ENCODE measurements at regions of chr21 and their contacts with region 1.

Region 1: DNA sequence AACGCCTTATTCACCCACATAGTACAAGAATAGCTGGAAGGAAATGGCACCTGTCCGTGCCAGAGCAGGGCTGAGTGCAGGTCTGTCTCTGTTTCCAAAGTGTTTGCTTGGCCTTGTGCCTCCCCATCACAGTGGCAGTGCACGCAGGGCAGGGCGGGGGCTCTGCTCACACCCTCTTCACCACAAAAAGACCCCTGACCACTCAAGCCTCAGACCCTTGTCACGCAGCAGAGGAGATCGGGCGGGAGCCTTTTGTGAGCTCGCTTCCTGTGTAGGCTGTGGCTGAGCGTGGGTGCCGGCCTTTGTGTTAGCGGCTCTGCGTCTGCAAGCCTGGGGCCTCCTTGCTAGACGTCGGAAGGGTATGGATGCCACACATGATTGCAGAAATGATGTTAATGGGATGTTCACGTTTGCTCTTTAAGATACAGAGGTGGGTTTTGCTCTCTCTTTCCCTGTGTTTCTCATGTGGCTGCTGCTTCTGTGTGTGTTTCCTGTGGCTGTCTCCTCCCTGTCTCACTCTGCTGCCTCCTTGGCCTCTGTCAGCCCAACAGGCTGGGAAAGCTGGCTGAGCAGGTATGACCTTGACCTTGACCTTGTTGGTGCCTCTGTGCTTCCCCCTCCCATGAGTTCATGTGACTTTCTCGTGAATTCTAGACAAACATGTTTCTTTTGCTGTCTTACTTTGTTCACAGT is 45.4 kb downstream of the S100B start:
- DNase-seq: peak; percentile 37 to 85 (median 62)
- ATAC-seq: peak; percentile 84
- H3K4me3 ChIP-seq: peak overlapping the region; percentile 44
- H3K4me3 Mint-ChIP-seq: peak overlapping the region; percentile 65
- H3K27ac ChIP-seq: peak overlapping the region; percentile 72 to 84
- H3K27ac Mint-ChIP-seq: peak overlapping the region; percentile 95
- H3K4me1 ChIP-seq: peaks cover 74% of the 10 kb centered on the region
- H3K4me1 Mint-ChIP-seq: peaks cover 75% of the 10 kb centered on the region
- H3K27me3 ChIP-seq: no peaks in the 10 kb centered on the region
- H3K27me3 Mint-ChIP-seq: no peaks in the 10 kb centered on the region
- CTCF ChIP-seq: no peak

Region 2: DNA sequence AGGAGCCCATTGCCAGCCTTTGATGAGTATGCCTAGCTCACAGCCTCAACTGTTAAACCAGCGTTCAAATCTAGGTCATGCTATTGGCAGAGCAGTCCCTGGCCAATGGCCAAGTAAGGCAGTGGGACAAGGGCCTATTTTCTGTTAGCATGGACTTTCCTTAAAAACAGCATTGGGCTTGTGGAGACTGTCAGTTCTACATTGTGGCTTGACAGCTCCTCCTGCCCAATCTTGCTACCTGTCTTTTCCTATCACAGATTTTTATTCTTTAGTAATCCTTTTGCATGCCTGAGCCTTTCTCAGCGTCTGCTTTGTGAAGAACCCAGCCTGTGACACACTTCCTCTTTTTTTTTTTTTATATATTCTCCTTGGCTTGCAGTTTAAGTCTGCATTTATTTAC is 44.3 kb before region 1 on chr21:
- CTCF ChIA-PET with region 1: no interaction called
- POLR2A ChIA-PET with region 1: no interaction called
- intact Hi-C with region 1: loop called in 1 of 2 experiments (anchors 5 kb)
- DNase-seq: peak in 5 of 14 experiments; percentile 8 to 62 (median 45)
- ATAC-seq: peak; percentile 64
- H3K4me3 ChIP-seq: no peak overlapping the region
- H3K4me3 Mint-ChIP-seq: no peak overlapping the region
- H3K27ac ChIP-seq: peak overlapping the region in 1 of 2 donors; percentile 15
- H3K27ac Mint-ChIP-seq: peak overlapping the region; percentile 82
- H3K4me1 ChIP-seq: peaks cover 8% of the 10 kb centered on the region
- H3K4me1 Mint-ChIP-seq: peaks cover 26% of the 10 kb centered on the region
- H3K27me3 ChIP-seq: no peaks in the 10 kb centered on the region
- H3K27me3 Mint-ChIP-seq: no peaks in the 10 kb centered on the region
- CTCF ChIP-seq: no peak

Region 3: DNA sequence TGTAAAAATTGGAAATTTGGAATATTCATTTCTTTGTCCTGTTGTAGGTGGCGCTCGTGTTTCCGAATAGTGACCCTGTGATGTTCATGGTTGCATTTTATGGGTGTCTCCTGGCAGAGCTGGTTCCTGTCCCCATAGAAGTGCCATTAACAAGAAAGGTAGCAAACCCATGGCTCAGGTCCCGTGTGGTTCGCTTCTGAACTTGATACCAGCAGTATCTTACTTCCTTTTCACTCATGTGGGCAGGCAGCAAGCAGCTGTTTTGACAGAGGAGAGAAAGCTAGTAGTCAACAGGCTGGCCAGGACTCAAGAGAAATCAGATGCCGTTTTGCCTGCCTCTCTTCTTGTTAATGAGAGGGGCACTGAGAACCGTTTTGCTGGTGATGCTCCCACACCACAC is 27.4 kb before region 1 on chr21:
- CTCF ChIA-PET with region 1: no interaction called
- POLR2A ChIA-PET with region 1: interaction called, 19 read pairs
- intact Hi-C with region 1: no loop called
- DNase-seq: peak in 10 of 14 experiments; percentile 9 to 62 (median 34)
- ATAC-seq: peak; percentile 86
- H3K4me3 ChIP-seq: no peak overlapping the region
- H3K4me3 Mint-ChIP-seq: peak overlapping the region; percentile 67
- H3K27ac ChIP-seq: no peak overlapping the region
- H3K27ac Mint-ChIP-seq: peak overlapping the region; percentile 81
- H3K4me1 ChIP-seq: peaks cover 5% of the 10 kb centered on the region
- H3K4me1 Mint-ChIP-seq: peaks cover 54% of the 10 kb centered on the region
- H3K27me3 ChIP-seq: no peaks in the 10 kb centered on the region
- H3K27me3 Mint-ChIP-seq: no peaks in the 10 kb centered on the region
- CTCF ChIP-seq: peak; percentile 29

Region 4: GRCh38 chr21:46622226-46622625 is 62.8 kb after region 1 on chr21:
- CTCF ChIA-PET with region 1: no interaction called
- POLR2A ChIA-PET with region 1: interaction called, 16 read pairs
- intact Hi-C with region 1: no loop called
- DNase-seq: peak in 9 of 14 experiments; percentile 20 to 90 (median 56)
- ATAC-seq: peak; percentile 70
- H3K4me3 ChIP-seq: no peak overlapping the region
- H3K4me3 Mint-ChIP-seq: peak overlapping the region; percentile 78
- H3K27ac ChIP-seq: peak overlapping the region; percentile 63 to 69
- H3K27ac Mint-ChIP-seq: peak overlapping the region; percentile 94
- H3K4me1 ChIP-seq: peaks cover 69% of the 10 kb centered on the region
- H3K4me1 Mint-ChIP-seq: peaks cover 74% of the 10 kb centered on the region
- H3K27me3 ChIP-seq: no peaks in the 10 kb centered on the region
- H3K27me3 Mint-ChIP-seq: no peaks in the 10 kb centered on the region
- CTCF ChIP-seq: no peak

Measured in CD4-positive, alpha-beta T cell (primary cell).